ENCODE measurements at regions of chr19 and their contacts with region 1.

Region 1: DNA sequence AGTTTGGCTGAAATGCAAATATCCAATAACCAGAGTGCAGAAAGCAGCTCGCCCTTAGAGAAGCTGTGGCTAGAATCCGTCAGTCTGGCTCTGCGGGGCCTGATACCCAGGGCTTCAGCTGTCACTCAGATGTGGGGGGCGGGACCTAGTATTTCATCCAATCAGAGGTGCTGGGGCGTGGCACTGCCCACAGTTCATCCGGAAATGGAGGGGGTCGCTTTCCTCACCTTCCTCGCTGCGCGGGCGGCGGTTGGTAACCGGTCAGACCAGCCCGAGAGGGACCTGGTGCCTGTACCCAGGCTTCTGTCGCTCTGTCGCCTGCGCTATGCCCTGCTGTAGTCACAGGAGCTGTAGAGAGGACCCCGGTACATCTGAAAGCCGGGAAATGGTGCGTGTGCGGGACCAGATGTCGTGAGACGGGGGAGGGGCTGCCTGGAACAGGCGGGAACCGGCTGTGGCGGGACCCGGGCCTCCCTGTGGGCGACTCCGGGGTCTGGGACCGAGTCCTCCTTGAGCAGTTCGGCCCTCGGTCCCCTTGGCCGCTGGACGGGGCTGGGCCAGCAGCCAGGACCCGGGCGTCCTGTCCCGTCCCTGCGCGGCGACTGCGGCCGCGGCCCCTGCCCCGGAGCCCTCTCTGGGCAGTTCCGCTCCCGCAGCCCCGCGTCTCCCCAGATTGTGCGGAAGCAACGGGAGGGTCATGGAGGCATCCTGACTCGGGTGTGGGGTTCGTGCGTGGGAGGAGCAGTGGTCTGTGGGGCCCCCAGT is at the start of gene ZNF700:
- DNase-seq: peak; percentile 67 to 93 (median 90)
- ATAC-seq: peak; percentile 94
- H3K4me3 ChIP-seq: peak within 1 kb of the TSS; percentile 98
- H3K4me3 Mint-ChIP-seq: peak within 1 kb of the TSS; percentile 91 to 99 (median 98)
- H3K27ac ChIP-seq: peak within 1 kb of the TSS; percentile 75
- H3K27ac Mint-ChIP-seq: peak within 1 kb of the TSS; percentile 93 to 99 (median 98)
- H3K4me1 ChIP-seq: peaks cover 6 to 10% of the 10 kb centered on the region in 2 donors
- H3K4me1 Mint-ChIP-seq: peaks cover 26 to 56% (median 39%) of the 10 kb centered on the region in 7 donors
- H3K27me3 ChIP-seq: no peaks in the 10 kb centered on the region
- H3K27me3 Mint-ChIP-seq: no peaks in the 10 kb centered on the region
- total RNA-seq, gene ZNF700: 18.0 to 26.4 (median 22.8) TPM

Region 2: DNA sequence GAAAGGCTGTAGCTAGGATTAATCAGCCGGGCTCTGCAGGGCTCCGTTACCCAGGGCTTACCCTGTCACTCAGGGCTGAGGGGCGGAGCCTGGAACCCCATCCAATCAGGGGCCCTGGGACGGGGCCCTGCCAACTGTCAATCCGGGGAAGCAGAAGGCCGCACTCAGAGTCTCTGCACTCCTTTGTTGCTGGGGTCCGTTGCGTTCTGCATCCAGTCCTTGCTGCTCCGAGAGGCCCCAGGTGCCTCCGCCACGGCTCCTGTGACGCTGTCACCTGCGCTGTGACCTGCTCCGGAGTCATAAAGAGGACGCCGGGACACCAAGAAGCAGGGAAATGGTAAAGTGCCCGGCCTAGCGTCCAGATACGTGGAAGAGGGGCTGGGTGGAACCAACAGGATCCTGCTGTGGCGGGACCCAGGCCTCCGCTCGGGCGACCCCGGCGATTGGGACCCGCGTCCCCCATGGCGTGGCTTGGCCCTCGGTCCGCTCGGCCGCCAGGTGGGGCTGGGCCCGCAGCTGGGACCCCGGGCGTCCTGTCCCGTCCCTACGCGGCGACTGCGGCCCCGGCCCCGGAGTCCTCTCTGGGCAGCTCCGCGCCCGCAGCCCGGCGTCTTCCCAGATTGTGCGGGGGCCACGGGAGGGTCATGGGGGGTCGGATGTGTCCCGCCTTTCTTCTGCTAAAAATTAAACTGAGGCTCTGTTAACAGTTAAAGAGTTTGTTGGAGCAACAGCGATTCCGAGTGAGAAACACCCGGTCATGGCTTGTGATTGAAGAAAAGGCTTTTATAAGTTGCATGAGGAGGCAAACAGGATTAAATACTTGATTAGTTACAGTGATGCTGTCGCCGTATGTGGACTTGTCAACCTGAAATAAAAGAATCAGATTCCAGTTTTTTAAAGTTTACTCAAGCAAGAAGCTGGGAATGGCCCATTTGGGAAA is 126.4 kb before region 1 on chr19 and contains the start of gene ZNF491:
- CTCF ChIA-PET with region 1: interaction called, 7 read pairs
- POLR2A ChIA-PET with region 1: interaction called, 6 read pairs
- intact Hi-C with region 1: loop called (anchors 1 to 5 kb)
- DNase-seq: peak; percentile 66 to 84 (median 79)
- ATAC-seq: peak; percentile 98
- H3K4me3 ChIP-seq: peak within 1 kb of the TSS; percentile 71
- H3K4me3 Mint-ChIP-seq: peak within 1 kb of the TSS; percentile 82 to 95 (median 92)
- H3K27ac ChIP-seq: peak within 1 kb of the TSS; percentile 82
- H3K27ac Mint-ChIP-seq: peak within 1 kb of the TSS; percentile 45 to 94 (median 91)
- H3K4me1 ChIP-seq: peaks cover 8 to 12% of the 10 kb centered on the region in 2 donors
- H3K4me1 Mint-ChIP-seq: peaks cover 12 to 29% (median 20%) of the 10 kb centered on the region in 7 donors
- H3K27me3 ChIP-seq: no peaks in the 10 kb centered on the region
- H3K27me3 Mint-ChIP-seq: no peaks in the 10 kb centered on the region
- total RNA-seq, gene ZNF491: 0.92 to 6.1 (median 1.9) TPM

Region 3: GRCh38 chr19:11881151-11881800 is 43.8 kb before region 1 on chr19:
- CTCF ChIA-PET with region 1: interaction called, 6 read pairs
- POLR2A ChIA-PET with region 1: interaction called, 3 read pairs
- intact Hi-C with region 1: loop called in 1 of 2 experiments (anchors 1 kb)
- DNase-seq: peak; percentile 20 to 72 (median 59)
- ATAC-seq: peak; percentile 74
- H3K4me3 ChIP-seq: no peak overlapping the region
- H3K4me3 Mint-ChIP-seq: peak overlapping the region in 1 of 10 donors; percentile 31
- H3K27ac ChIP-seq: no peak overlapping the region
- H3K27ac Mint-ChIP-seq: peak overlapping the region in 3 of 9 donors; percentile 3 to 15 (median 12)
- H3K4me1 ChIP-seq: no peaks in the 10 kb centered on the region
- H3K4me1 Mint-ChIP-seq: peaks cover 0 to 7% (median 0%) of the 10 kb centered on the region in 7 donors
- H3K27me3 ChIP-seq: no peaks in the 10 kb centered on the region
- H3K27me3 Mint-ChIP-seq: peaks cover 0 to 3% (median 0%) of the 10 kb centered on the region in 5 donors

Region 4: DNA sequence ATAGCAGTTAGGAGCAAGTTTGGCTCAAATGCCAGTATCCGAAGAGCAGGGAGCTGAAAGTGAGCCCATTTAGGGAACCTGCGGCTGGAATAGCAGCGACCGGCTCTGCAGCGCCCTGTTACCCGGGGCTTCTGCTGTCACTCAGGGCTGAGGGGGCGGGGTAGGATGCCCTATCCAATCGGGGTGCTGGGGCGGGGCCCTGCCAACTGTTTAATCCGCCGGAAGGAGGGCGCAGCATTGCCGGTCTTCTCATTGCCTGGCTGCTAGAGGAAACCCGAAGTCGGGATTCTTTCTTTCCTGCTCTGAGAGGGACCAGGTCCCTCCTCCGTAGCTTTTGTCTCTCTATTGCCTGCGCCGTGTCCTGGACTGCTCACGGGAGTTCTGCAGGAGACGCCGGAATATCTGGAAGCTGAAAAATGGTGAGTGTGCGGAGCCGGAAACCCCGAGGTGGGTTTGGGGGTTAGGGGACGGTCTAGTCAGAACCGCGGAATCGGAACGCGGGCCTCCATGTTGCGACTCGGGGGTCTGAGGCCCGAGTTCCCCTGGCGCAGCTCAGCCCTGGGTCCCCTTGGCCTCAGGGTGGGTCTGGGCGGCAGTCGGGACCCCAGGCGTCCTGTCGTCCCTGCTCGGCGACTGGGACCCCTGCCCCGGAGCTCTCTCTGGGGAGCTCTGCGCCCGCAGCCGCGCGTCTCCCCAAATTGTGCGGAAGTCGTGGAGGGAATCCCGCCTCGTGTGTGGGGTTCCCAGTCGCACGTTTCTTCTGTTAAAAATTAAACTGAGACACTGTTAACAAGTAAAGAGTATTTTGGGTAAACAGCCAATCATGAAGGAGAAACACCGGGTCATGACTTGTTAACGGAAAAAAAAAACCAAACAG is 62.6 kb after region 1 on chr19:
- CTCF ChIA-PET with region 1: interaction called, 95 read pairs
- POLR2A ChIA-PET with region 1: interaction called, 65 read pairs
- intact Hi-C with region 1: loop called (anchors 1 kb)
- DNase-seq: peak; percentile 73 to 90 (median 87)
- ATAC-seq: peak; percentile 95
- H3K4me3 ChIP-seq: peak overlapping the region; percentile 98
- H3K4me3 Mint-ChIP-seq: peak overlapping the region; percentile 84 to 99 (median 96)
- H3K27ac ChIP-seq: peak overlapping the region; percentile 88
- H3K27ac Mint-ChIP-seq: peak overlapping the region; percentile 70 to 97 (median 96)
- H3K4me1 ChIP-seq: peaks cover 0 to 8% of the 10 kb centered on the region in 2 donors
- H3K4me1 Mint-ChIP-seq: peaks cover 15 to 39% (median 28%) of the 10 kb centered on the region in 7 donors
- H3K27me3 ChIP-seq: no peaks in the 10 kb centered on the region
- H3K27me3 Mint-ChIP-seq: peaks cover 0 to 2% (median 0%) of the 10 kb centered on the region in 5 donors

Region 5: DNA sequence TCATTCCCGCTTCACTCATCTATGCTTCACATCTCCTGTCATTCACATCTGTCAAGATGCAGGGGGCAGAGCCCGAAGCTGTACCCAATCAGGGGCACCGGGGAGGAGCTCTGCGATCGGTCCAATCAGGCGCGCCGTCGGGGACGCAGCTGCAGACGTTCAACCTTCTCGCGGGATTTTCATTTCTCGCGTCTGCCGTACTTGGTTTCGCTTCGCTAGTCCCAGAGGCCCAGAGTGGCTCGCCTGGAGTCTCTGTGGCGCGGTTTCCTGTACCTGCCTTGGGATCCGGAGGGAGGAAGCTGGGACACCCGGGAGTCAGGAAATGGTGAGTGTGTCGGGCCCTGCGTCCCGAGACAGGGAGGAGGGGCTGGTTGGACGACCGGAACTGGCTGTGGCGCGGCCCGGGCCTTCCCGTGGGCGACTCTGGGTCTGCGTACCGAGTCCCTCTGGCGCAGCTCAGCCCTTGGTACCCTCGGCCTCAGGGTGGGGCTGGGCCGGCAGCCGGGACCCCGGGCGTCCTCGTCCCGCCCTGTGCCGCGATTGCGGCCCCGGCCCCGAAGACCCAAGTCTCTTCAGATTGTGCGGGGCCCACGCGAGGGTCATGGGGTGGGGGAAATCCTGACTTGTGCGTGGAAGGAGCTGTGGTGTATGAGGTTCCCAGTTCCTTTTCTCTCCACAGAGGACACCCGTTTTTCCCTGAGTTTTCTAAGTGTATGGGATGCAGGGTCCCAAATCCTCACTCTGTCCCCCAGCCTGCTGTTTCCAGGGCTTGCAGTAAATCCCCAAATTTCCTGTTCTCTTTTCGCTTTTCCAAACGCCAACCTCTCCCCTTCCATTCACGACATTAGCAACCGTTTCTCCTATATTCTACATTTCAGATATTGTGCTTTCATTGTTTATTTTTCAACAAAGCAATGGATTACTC is 238.1 kb after region 1 on chr19 and contains the start of gene ZNF136:
- CTCF ChIA-PET with region 1: no interaction called
- POLR2A ChIA-PET with region 1: interaction called, 8 read pairs
- intact Hi-C with region 1: loop called in 1 of 2 experiments (anchors 2 kb)
- DNase-seq: peak; percentile 77 to 95 (median 91)
- ATAC-seq: peak; percentile 99
- H3K4me3 ChIP-seq: peak within 1 kb of the TSS; percentile 78
- H3K4me3 Mint-ChIP-seq: peak within 1 kb of the TSS; percentile 88 to 100 (median 98)
- H3K27ac ChIP-seq: peak within 1 kb of the TSS; percentile 96
- H3K27ac Mint-ChIP-seq: peak within 1 kb of the TSS; percentile 88 to 100 (median 98)
- H3K4me1 ChIP-seq: peaks cover 7 to 15% of the 10 kb centered on the region in 2 donors
- H3K4me1 Mint-ChIP-seq: peaks cover 28 to 64% (median 46%) of the 10 kb centered on the region in 7 donors
- H3K27me3 ChIP-seq: no peaks in the 10 kb centered on the region
- H3K27me3 Mint-ChIP-seq: no peaks in the 10 kb centered on the region
- total RNA-seq, gene ZNF136: 16.8 to 36.8 (median 31.1) TPM

Region 6: DNA sequence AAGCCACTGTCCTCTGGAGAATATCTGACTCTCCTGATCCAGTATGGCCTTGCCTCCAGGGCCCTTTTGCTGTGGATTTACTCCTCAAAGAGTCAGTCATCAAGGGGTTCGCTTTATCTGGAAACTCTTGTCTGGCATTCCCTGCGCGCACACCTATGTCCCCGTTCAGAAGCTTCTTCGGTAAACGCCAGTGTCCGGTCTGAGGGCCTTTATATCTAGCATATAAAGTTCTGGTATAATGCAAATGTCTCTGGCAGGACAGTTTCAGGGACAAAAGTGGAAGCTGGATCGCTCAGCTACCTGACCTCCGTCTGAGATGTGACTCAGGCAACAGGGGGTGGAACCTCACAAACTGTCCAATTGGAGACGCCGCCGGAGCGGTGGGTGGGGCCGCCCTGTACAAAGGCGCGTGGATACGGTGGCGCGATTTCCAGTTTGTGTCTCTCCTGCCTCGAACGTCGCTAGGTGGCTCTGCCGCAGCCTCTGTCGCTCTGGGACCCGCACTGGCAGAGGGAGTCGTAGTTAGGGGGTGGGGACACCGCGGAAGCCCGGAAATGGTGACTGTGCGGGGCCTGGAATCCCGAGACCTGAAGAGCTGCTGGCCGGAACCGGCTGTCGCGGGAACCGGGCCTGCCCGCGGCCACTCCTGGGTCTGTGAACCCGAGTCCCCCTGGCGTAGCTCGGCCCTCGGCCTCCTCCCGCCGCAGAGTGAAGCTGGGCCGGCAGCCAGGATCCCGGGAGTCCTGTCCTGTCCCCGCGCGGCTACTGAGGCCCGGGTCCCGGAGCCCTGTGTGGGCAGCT is 570.1 kb after region 1 on chr19:
- CTCF ChIA-PET with region 1: no interaction called
- POLR2A ChIA-PET with region 1: no interaction called
- intact Hi-C with region 1: loop called in 1 of 2 experiments (anchors 10 kb)
- DNase-seq: peak; percentile 76 to 94 (median 91)
- ATAC-seq: peak; percentile 100
- H3K4me3 ChIP-seq: peak overlapping the region; percentile 80
- H3K4me3 Mint-ChIP-seq: peak overlapping the region; percentile 84 to 95 (median 91)
- H3K27ac ChIP-seq: peak overlapping the region; percentile 72
- H3K27ac Mint-ChIP-seq: peak overlapping the region; percentile 84 to 98 (median 91)
- H3K4me1 ChIP-seq: peaks cover 9 to 11% of the 10 kb centered on the region in 2 donors
- H3K4me1 Mint-ChIP-seq: peaks cover 0 to 16% (median 13%) of the 10 kb centered on the region in 7 donors
- H3K27me3 ChIP-seq: no peaks in the 10 kb centered on the region
- H3K27me3 Mint-ChIP-seq: no peaks in the 10 kb centered on the region